ENCODE measurements at regions of chr4 and their contacts with region 1.

Region 1: DNA sequence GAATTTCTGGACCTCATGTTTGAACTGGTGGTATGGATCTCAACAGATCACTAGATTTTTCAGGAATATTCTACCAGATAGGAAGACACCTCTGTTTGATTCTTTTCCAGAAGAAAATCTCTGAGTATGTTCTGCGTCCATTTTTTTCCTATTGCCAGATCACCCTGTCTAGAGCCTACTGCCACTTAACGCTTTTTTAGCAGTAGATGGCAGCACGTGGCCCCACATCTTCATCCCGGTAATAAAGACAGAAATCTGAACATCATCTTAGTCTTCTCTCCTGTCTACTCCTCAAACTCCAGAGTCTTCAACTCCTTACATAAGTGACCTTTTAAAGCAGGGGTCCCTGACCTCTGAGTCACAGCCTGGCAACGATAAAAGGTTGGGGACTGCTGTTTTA is 184.7 kb downstream of the TMA16 start:
- DNase-seq: peak; percentile 34

Region 2: GRCh38 chr4:163554870-163555465 is 124.2 kb before region 1 on chr4:
- in situ Hi-C with region 1: loop called (anchors 10 kb)
- DNase-seq: peak; percentile 68